ENCODE measurements at regions of chr2 and their contacts with region 1.

Region 1: GRCh38 chr2:227579791-227580190 is 18.9 kb upstream of the SCYGR2 start:
- DNase-seq: no peak
- H3K4me3 ChIP-seq: no peak overlapping the region
- CTCF ChIP-seq: no peak

Region 2: GRCh38 chr2:227632827-227633226 is 53.0 kb after region 1 on chr2:
- in situ Hi-C with region 1: loop called (anchors 5 kb)
- DNase-seq: no peak
- H3K4me3 ChIP-seq: no peak overlapping the region
- CTCF ChIP-seq: no peak